Psoas muscle (tissue), 8 donors: ENCODE measurements at regions of chr16 and their contacts with region 1.

Region 1: GRCh38 chr16:23081675-23082119 is 67.6 kb downstream of the USP31 start:
- DNase-seq: no peak
- ATAC-seq: no peak
- H3K4me3 ChIP-seq: no peak overlapping the region
- H3K27ac ChIP-seq: no peak overlapping the region
- H3K4me1 ChIP-seq: no peaks in the 10 kb centered on the region
- H3K27me3 ChIP-seq: no peaks in the 10 kb centered on the region
- CTCF ChIP-seq: no peak

Region 2: GRCh38 chr16:23149349-23149996 is 67.8 kb after region 1 on chr16 and contains the start of gene USP31:
- intact Hi-C with region 1: loop called in 1 of 2 experiments (anchors 5 kb)
- DNase-seq: peak; percentile 96 to 97
- ATAC-seq: peak; percentile 95 to 98 (median 97)
- H3K4me3 ChIP-seq: peak within 1 kb of the TSS; percentile 84
- H3K27ac ChIP-seq: peak within 1 kb of the TSS; percentile 85
- H3K4me1 ChIP-seq: peaks cover 32% of the 10 kb centered on the region
- H3K27me3 ChIP-seq: no peaks in the 10 kb centered on the region
- CTCF ChIP-seq: no peak
- total RNA-seq, gene USP31: 9.5 to 19.6 (median 16.2) TPM

Region 3: DNA sequence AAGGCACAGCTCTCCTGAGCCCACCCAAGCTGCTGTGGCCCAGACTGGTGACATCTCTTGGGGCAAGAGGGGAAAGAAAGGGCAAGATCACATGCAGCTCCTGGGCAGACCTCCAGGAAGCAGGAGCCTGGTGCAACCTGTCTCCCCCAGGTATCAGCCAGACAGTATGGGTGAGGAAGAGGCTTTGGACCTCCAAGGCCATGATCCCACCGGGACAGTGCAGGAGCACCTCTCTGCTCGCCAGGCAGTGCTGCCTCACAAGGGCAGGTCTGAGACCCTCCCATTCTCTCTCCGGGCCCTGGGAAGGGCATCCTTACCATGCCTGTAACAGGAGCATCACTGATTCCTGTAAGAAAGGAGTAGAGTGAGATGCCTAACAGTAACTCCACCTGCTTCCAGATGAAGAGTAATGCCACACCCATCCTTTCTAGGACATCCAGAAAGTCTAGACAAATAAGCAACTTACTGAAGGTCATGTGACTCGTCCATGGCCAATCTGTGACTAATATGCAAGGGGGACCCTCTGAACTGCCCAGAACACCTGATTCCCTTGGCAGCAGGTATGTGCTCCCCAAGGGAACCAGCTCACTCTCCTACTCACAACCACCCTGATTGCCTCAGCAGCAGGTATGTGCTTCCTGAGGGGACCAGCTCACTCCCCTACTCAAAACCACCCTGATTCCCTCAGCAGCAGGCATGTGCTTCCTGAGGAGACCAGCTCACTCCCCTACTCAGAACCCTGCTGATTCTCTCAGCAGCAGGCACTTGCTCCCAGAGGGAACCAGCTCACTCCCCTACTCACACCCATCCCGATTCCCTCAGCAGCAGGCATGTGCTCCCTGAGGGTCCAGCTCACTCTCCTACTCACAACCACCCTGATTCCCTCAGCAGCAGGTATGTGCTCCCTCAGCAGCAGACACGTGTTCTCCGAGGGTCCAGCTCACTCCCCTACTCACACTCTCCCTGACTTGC is 397.2 kb after region 1 on chr16:
- intact Hi-C with region 1: no loop called
- DNase-seq: no peak
- ATAC-seq: peak in 2 of 4 donors; percentile 26 to 30
- H3K4me3 ChIP-seq: no peak overlapping the region
- H3K27ac ChIP-seq: no peak overlapping the region
- H3K4me1 ChIP-seq: no peaks in the 10 kb centered on the region
- H3K27me3 ChIP-seq: no peaks in the 10 kb centered on the region
- CTCF ChIP-seq: no peak